ENCODE measurements at regions of chr2 and their contacts with region 1.

Region 1: DNA sequence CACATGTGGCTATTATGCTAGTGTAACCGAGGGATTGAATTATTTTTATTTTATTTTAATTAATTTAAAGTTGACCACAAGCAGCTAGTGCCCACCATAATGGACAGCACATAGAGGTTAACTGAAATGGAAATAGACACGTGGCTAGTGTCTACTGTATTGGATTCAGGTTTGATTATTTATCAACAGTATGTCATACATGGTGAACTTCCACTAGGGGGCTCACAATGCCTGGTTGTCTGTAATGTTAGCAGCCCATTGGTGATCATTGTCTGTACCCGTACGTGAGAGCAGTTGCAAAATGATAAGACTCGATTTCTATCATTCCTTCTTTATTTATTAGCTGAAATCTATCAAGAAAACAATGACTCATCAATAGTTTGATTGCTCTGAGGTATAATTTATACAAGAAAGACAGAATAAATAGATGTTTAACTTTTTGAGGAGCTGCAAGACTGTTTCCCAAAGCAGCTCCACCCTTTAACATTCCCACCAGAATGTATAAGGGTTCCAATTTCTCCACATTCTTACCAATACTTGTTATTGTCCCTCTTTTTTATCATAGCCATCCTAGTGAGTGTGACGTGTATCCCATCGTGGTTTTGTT is 76.5 kb downstream of the CYBRD1 start:
- DNase-seq: peak; percentile 26
- H3K4me3 Mint-ChIP-seq: no peak overlapping the region
- H3K27ac Mint-ChIP-seq: no peak overlapping the region
- H3K4me1 Mint-ChIP-seq: peaks cover 4% of the 10 kb centered on the region
- H3K27me3 Mint-ChIP-seq: peaks cover 11% of the 10 kb centered on the region

Region 2: GRCh38 chr2:171574149-171574795 is 24.5 kb before region 1 on chr2:
- intact Hi-C with region 1: loop called (anchors 1 kb)
- DNase-seq: peak; percentile 73
- H3K4me3 Mint-ChIP-seq: no peak overlapping the region
- H3K27ac Mint-ChIP-seq: no peak overlapping the region
- H3K4me1 Mint-ChIP-seq: no peaks in the 10 kb centered on the region
- H3K27me3 Mint-ChIP-seq: peaks cover 9% of the 10 kb centered on the region

Region 3: GRCh38 chr2:171703574-171704347 is 104.9 kb after region 1 on chr2:
- intact Hi-C with region 1: loop called (anchors 5 kb)
- DNase-seq: no peak
- H3K4me3 Mint-ChIP-seq: no peak overlapping the region
- H3K27ac Mint-ChIP-seq: no peak overlapping the region
- H3K4me1 Mint-ChIP-seq: peaks cover 12% of the 10 kb centered on the region
- H3K27me3 Mint-ChIP-seq: no peaks in the 10 kb centered on the region

Region 4: GRCh38 chr2:171798252-171798741 is 199.5 kb after region 1 on chr2:
- intact Hi-C with region 1: loop called (anchors 10 kb)
- DNase-seq: no peak
- H3K4me3 Mint-ChIP-seq: no peak overlapping the region
- H3K27ac Mint-ChIP-seq: peak overlapping the region; percentile 52
- H3K4me1 Mint-ChIP-seq: peaks cover 25% of the 10 kb centered on the region
- H3K27me3 Mint-ChIP-seq: no peaks in the 10 kb centered on the region

Region 5: GRCh38 chr2:172131713-172132555 is 533.1 kb after region 1 on chr2:
- intact Hi-C with region 1: loop called (anchors 1 kb)
- DNase-seq: no peak
- H3K4me3 Mint-ChIP-seq: no peak overlapping the region
- H3K27ac Mint-ChIP-seq: no peak overlapping the region
- H3K4me1 Mint-ChIP-seq: no peaks in the 10 kb centered on the region
- H3K27me3 Mint-ChIP-seq: peaks cover 32% of the 10 kb centered on the region